Left ventricle myocardium inferior (tissue), 1 donor: ENCODE measurements at regions of chr1 and their contacts with region 1.

Region 1: GRCh38 chr1:117059678-117060440 is at the start of gene TTF2:
- DNase-seq: peak; percentile 88
- H3K4me3 ChIP-seq: peak within 1 kb of the TSS; percentile 81
- H3K27ac ChIP-seq: peak within 1 kb of the TSS; percentile 40
- H3K4me1 ChIP-seq: peaks cover 20% of the 10 kb centered on the region
- H3K27me3 ChIP-seq: no peaks in the 10 kb centered on the region
- CTCF ChIP-seq: peak; percentile 51
- total RNA-seq, gene TTF2: 6.4 TPM

Region 2: DNA sequence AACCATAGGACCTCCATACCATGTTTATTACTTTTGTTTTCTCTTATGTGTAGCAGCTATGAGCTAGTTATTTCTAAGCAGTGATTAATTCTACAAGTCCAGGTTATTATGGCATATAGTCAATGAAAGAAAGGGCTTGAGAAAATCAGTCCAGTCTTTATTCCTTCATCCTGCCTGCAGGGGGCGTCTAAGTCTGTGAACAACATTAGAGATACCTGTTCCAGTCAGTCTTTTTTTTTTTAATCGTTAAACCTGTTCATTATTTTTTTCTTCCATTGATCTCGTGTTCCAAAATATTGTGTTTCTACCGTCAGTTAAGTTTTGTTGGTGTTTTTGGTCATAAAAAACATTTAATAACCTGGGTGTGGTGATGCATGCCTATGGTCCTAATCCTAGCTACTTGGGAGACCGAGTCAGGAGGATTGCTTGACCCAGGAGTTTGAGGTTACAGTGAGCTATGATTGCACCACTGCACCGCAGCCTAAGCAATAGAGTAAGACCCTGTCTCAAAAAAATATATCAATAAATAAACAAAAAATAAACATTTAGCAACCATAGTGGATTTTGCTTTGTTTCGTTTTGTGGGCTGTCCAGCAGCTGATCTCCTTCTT is 335.0 kb before region 1 on chr1:
- intact Hi-C with region 1: loop called (anchors 5 kb)
- DNase-seq: no peak
- H3K4me3 ChIP-seq: no peak overlapping the region
- H3K27ac ChIP-seq: no peak overlapping the region
- H3K4me1 ChIP-seq: no peaks in the 10 kb centered on the region
- H3K27me3 ChIP-seq: no peaks in the 10 kb centered on the region
- CTCF ChIP-seq: peak; percentile 78

Region 3: DNA sequence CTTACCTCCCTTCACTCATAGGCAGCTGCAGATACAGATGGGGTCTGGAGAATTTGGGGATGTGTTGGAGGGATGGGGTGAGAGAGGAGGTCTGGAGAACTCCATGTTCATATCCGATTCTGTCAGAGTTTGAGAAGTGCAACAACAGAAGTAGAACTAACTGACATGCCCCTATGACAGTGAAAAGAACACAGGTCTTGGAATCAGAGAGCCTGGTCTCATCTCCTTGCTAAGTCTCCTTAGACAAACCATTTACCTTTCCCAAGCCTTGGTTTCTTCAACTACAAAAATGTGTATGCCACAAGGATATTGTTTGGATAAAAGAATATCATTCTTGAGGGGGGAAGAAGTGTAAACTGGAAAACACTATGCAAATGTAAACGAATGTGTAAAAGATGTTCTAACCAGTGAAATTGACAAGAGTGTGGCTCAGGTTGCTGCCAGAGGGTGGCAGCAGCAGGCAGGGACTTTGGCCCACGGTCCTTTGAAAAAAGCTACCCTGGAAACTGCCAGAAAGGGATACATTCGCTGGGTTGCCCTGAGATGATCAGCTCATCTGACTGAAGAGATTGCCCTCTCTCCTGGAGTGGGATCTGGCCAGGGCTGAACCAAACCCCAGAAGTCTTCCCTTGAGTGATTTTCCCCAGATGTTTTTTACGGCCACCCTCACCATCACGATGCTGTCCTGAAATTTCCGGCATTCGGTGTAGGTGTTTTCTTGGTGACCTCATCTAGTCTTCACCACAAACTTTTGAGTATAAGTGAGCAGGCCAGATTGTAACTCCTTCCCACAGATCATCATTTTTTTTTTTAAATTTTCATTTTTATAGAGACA is 322.6 kb before region 1 on chr1:
- intact Hi-C with region 1: loop called (anchors 5 kb)
- DNase-seq: peak; percentile 29
- H3K4me3 ChIP-seq: no peak overlapping the region
- H3K27ac ChIP-seq: no peak overlapping the region
- H3K4me1 ChIP-seq: no peaks in the 10 kb centered on the region
- H3K27me3 ChIP-seq: peaks cover 7% of the 10 kb centered on the region
- CTCF ChIP-seq: peak; percentile 81

Region 4: GRCh38 chr1:116853670-116854402 is 206.0 kb before region 1 on chr1:
- intact Hi-C with region 1: loop called (anchors 5 kb)
- DNase-seq: no peak
- H3K4me3 ChIP-seq: no peak overlapping the region
- H3K27ac ChIP-seq: no peak overlapping the region
- H3K4me1 ChIP-seq: peaks cover 19% of the 10 kb centered on the region
- H3K27me3 ChIP-seq: no peaks in the 10 kb centered on the region
- CTCF ChIP-seq: no peak

Region 5: DNA sequence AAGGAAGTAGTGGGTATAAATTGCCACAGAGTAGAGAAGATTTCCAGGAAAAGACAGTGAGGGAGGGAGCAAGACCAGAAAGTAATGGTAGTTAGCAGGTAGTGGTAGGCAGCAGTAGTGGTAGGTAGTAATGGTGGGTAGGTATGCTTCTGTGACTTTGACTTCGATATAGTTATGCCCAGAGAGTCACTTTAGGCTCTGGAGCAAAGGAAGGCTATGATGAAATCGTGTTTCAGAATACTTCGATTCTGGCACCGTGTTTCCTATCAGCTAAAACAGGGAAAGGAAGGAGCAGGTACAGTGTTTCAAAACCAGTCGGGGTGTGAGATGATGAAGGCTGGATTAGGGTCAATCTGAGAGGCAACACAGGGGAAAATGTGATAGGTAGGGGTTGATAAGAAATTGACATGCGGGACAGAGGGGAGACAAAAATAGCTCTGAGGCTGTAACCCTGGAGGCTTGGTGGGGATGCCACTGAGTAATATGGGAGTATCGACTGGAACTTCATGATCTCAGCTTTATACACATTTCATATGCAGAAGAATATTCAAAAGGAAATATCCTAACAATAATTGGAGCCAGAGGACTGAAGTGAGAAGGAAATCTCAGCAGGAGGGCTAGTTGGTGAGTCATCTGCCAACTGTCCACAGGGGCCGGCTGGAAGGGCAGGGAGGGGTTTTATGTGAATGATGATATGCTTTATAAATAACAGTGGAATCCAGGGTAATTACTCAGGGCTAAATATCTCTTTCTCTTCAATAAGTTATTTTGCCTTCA is 86.9 kb after region 1 on chr1:
- intact Hi-C with region 1: no loop called
- DNase-seq: no peak
- H3K4me3 ChIP-seq: peak overlapping the region; percentile 38
- H3K27ac ChIP-seq: no peak overlapping the region
- H3K4me1 ChIP-seq: peaks cover 21% of the 10 kb centered on the region
- H3K27me3 ChIP-seq: peaks cover 6% of the 10 kb centered on the region
- CTCF ChIP-seq: no peak

Region 6: GRCh38 chr1:117284399-117285215 is 224.7 kb after region 1 on chr1:
- intact Hi-C with region 1: loop called (anchors 10 kb)
- DNase-seq: no peak
- H3K4me3 ChIP-seq: no peak overlapping the region
- H3K27ac ChIP-seq: no peak overlapping the region
- H3K4me1 ChIP-seq: no peaks in the 10 kb centered on the region
- H3K27me3 ChIP-seq: no peaks in the 10 kb centered on the region
- CTCF ChIP-seq: peak; percentile 69

Region 7: DNA sequence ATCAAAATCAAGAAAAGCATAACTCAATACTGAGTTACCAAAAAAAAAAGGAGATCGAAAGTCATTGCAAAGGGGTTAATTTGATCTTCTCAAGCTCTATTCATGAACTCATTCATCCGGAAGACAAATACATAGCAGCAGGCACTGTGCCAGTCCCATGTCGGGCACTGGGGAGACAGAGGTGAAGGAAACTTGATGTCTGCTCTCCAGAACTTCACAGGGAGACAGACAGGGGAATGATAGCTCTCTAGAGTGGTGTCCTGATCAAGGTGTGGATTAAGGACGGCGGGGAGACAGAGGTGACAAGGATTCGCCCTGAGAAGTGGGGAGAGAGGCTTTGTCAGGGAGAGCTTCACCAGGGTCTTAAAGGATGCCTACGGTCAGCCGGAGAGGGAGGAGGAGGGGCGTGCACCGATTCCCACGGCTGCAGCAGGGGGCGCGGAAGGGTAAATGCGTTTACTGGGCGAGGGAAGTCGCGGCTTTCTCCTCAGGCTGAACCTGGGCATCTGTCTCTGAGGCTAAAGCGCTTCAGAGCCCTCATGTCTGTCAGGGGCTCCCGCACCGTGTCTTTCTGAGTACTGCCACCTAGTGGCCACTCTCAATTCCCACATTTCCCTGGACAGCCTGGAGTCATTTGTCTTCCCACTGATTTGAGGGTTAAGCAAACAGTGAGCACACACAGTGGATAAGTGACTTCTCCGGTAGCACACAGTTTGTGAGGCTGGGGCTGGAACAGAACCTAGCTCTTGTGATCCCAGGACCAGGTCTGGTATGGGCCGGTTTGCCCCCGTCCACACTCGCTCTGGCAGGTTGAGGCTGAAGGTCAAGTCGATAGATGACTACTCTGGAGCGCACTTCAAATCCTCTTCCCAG is 698.8 kb after region 1 on chr1:
- intact Hi-C with region 1: loop called (anchors 10 kb)
- DNase-seq: peak; percentile 48
- H3K4me3 ChIP-seq: peak overlapping the region; percentile 59
- H3K27ac ChIP-seq: no peak overlapping the region
- H3K4me1 ChIP-seq: peaks cover 10% of the 10 kb centered on the region
- H3K27me3 ChIP-seq: no peaks in the 10 kb centered on the region
- CTCF ChIP-seq: peak; percentile 89